ENCODE measurements at regions of chr17 and their contacts with region 1.

Region 1: GRCh38 chr17:75904749-75905521 is at the start of gene MRPL38:
- DNase-seq: peak; percentile 96 to 98 (median 97)
- ATAC-seq: peak; percentile 94 to 98 (median 96)
- H3K4me3 ChIP-seq: peak within 1 kb of the TSS; percentile 71 to 96 (median 96)
- H3K27ac ChIP-seq: peak within 1 kb of the TSS; percentile 72 to 86 (median 84)
- H3K4me1 ChIP-seq: peaks cover 0 to 26% (median 4%) of the 10 kb centered on the region in 4 donors
- H3K27me3 ChIP-seq: no peaks in the 10 kb centered on the region
- CTCF ChIP-seq: peak; percentile 99 to 100 (median 100)
- POLR2A ChIP-seq: peak; percentile 65
- total RNA-seq, gene MRPL38: 46.1 to 79.8 (median 57.3) TPM

Region 2: DNA sequence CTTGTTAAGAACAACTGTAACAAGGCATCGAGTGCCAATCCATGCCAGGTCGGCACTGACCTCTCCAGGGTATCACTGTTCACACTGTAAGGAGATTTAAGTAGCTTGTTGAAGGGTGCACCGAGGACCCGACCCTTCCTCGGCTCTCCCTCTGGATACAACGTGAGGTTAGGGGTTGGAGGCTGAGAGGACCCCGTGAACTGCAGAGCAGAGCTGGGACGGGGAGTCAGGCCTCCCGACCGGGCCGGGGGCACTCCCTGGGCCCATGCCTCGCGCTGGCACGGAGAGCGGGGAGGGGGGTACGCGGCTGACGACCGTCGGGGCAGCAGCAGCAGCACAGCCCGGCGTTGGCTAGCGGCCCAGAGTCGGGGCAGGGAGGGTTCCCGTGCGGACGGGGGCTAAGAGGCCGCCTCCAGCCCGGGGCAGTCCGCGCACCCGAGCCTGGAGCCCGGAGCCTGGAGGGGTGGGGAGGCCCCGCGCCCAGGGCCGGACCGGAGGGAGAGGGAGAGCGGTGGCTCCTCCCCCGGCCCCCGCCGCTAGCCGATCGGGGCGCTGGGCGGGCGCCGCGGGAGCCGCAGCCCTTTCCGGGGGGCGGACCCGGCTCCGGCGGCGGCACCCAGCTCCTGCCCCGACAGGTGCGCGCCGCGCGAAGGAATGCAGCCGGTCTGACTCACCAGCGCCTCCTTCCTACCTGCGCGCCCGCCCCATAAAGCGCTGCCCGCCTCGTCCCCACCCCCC is 184.0 kb before region 1 on chr17 and contains the start of gene ITGB4:
- intact Hi-C with region 1: no loop called
- DNase-seq: peak in 1 of 3 donors; percentile 65
- ATAC-seq: peak; percentile 62 to 84 (median 70)
- H3K4me3 ChIP-seq: peak within 1 kb of the TSS; percentile 23 to 40 (median 28)
- H3K27ac ChIP-seq: no peak within 1 kb of the TSS
- H3K4me1 ChIP-seq: no peaks in the 10 kb centered on the region
- H3K27me3 ChIP-seq: no peaks in the 10 kb centered on the region
- CTCF ChIP-seq: no peak
- POLR2A ChIP-seq: peak; percentile 31
- total RNA-seq, gene ITGB4: 0.92 to 4.1 (median 2.0) TPM

Region 3: DNA sequence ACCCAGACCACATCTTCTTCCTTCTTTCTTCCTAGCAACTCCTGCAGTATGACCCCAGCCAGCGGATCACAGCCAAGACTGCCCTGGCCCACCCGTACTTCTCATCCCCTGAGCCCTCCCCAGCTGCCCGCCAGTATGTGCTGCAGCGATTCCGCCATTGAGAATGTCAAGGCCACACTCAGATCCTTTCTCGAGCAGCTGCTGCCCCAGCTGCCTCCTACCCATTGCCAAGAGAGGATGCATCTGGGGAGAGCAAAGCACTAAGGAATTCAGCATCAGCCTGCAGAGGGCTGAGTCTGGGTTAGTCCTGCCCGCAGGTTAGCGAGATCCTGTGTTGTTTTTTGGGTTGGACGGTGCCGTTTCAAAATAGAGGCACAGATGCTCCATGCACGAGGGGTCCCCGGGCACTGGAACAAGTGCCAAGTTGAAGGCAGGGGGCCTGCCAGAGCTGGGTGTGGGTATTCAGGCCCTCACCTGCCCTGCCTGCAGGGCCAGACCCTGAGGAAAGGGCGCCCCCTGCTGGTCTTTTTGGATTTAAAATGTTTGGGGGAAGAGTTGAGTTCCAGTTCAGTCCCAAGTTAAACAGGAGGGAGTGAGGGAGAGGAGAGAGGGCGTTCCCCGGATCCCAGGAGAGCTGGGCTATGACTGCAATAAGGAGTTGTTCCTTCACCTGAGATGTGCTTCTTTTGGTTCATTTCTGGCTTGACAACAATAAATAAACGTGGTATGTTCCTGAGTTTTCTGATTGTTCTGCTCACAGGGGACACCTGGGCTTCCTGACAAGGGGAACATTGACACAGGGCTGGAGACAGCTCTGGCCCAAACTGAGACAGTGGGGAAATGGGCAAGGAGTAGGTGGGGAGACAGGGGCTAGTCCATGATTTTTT is 100.6 kb after region 1 on chr17:
- intact Hi-C with region 1: loop called (anchors 5 kb)
- DNase-seq: peak; percentile 71 to 90 (median 77)
- ATAC-seq: peak; percentile 49 to 59 (median 54)
- H3K4me3 ChIP-seq: no peak overlapping the region
- H3K27ac ChIP-seq: no peak overlapping the region
- H3K4me1 ChIP-seq: peaks cover 0 to 27% (median 13%) of the 10 kb centered on the region in 4 donors
- H3K27me3 ChIP-seq: no peaks in the 10 kb centered on the region
- CTCF ChIP-seq: peak; percentile 79 to 87 (median 80)
- POLR2A ChIP-seq: no peak